ENCODE measurements at regions of chr2 and their contacts with region 1.

Region 1: GRCh38 chr2:207166039-207166348 is 246 bp upstream of the KLF7 start:
- DNase-seq: peak; percentile 99 to 100
- H3K4me3 ChIP-seq: peak overlapping the region; percentile 79 to 95
- H3K27ac ChIP-seq: peak overlapping the region; percentile 100
- H3K4me1 ChIP-seq: peaks cover 6 to 16% of the 10 kb centered on the region in 2 donors
- H3K27me3 ChIP-seq: no peaks in the 10 kb centered on the region
- CTCF ChIP-seq: no peak

Region 2: GRCh38 chr2:207041786-207042554 is 124.0 kb before region 1 on chr2:
- intact Hi-C with region 1: loop called (anchors 1 kb)
- DNase-seq: no peak
- H3K4me3 ChIP-seq: peak overlapping the region in 1 of 2 donors; percentile 54
- H3K27ac ChIP-seq: peak overlapping the region; percentile 61 to 71
- H3K4me1 ChIP-seq: peaks cover 0 to 23% of the 10 kb centered on the region in 2 donors
- H3K27me3 ChIP-seq: no peaks in the 10 kb centered on the region
- CTCF ChIP-seq: no peak

Region 3: DNA sequence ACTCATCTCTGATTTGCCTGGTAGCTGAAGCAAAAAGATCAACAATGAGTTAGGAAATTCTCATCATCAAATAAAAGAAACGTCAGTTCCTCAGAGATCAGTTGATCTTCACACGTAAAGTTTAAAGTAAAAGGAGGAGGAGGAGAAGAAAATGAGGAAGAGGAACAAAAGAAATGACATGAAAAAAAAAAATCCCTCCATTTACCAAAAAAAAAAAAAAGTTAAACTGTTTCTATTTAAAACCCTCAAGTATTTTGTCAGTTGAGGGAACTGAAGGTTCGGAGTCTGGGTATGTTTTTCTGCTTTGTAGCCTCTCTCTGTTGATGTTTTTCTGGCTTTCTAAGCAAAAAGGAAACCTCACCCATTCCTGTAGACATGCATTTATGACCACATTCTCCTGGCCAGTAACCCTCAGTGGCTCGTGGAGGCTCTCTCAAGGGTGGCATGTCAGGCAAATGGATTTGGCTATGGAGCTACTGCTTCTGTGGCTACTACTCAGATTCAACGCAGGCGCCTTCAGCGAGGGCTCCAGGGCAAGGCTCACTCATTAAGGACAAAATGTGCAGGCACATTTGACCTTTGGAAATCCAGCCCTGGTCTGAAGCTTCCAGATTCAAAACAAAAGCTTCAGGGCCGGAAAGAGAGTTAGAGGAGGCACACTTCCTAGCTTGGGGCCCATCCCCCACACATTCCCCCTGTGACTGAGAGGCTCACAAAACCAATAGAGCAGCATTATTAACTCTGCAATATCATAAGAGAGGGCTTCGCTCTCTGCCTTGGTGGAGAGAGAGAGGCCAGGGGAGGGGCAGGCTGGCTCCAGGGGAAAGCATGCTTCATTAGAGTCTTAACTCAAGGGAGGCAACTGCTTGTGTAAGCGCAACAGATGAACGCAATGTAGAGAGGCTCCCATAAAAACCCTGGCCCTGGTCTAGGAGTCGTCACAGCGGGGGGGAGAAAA is 22.5 kb before region 1 on chr2:
- intact Hi-C with region 1: loop called (anchors 1 kb)
- DNase-seq: peak; percentile 61 to 91
- H3K4me3 ChIP-seq: peak overlapping the region; percentile 18 to 56
- H3K27ac ChIP-seq: peak overlapping the region; percentile 89 to 96
- H3K4me1 ChIP-seq: peaks cover 17 to 75% of the 10 kb centered on the region in 2 donors
- H3K27me3 ChIP-seq: no peaks in the 10 kb centered on the region
- CTCF ChIP-seq: no peak

Region 4: GRCh38 chr2:207258263-207258991 is 92.4 kb after region 1 on chr2:
- intact Hi-C with region 1: loop called (anchors 1 kb)
- DNase-seq: peak; percentile 69 to 94
- H3K4me3 ChIP-seq: no peak overlapping the region
- H3K27ac ChIP-seq: peak overlapping the region; percentile 66 to 75
- H3K4me1 ChIP-seq: peaks cover 4 to 19% of the 10 kb centered on the region in 2 donors
- H3K27me3 ChIP-seq: no peaks in the 10 kb centered on the region
- CTCF ChIP-seq: no peak

Region 5: DNA sequence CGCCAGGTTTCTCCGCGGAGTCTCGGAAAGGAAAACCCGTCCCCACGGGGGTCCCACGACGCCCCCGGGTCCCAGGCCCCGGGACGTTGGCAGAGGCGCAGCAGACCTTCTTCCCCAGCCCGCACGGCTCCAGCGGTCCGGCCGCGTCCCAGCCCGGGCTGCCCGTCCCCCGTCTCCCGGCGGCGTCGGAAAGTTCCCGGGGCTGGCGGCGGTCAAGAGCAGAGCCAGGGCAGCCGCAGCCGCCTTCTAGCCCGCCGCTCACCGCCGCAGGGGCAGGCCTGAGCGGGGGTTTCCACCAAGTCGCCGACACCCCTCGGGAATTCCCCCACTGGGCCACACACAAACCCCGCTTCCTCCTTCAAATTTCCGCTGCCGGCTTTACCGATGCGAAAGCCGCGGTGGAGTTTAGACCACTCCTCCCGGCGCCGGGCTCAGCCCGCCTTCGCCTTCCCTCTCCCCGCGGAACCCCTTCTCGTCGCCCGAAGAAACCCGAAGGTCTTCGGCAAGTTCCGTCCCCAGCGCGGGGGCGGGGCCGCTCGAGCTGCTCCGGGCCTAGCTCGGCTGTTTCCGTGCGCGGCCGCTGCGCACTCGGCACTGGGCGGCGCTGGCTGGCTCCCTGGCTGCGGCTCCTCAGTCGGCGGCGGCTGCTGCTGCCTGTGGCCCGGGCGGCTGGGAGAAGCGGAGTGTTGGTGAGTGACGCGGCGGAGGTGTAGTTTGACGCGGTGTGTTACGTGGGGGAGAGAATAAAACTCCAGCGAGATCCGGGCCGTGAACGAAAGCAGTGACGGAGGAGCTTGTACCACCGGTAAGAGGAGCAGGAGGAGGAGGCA is 363.6 kb after region 1 on chr2 and contains the start of gene CREB1:
- intact Hi-C with region 1: loop called (anchors 1 kb)
- DNase-seq: peak; percentile 97 to 99
- H3K4me3 ChIP-seq: peak within 1 kb of the TSS; percentile 80 to 95
- H3K27ac ChIP-seq: peak within 1 kb of the TSS; percentile 96 to 97
- H3K4me1 ChIP-seq: peaks cover 7 to 30% of the 10 kb centered on the region in 2 donors
- H3K27me3 ChIP-seq: no peaks in the 10 kb centered on the region
- CTCF ChIP-seq: peak in 1 of 3 experiments; percentile 1
- total RNA-seq, gene CREB1: 12.8 TPM

Region 6: GRCh38 chr2:207558106-207558505 is 392.1 kb after region 1 on chr2:
- intact Hi-C with region 1: no loop called
- DNase-seq: no peak
- H3K4me3 ChIP-seq: no peak overlapping the region
- H3K27ac ChIP-seq: no peak overlapping the region
- H3K4me1 ChIP-seq: peaks cover 0 to 6% of the 10 kb centered on the region in 2 donors
- H3K27me3 ChIP-seq: no peaks in the 10 kb centered on the region
- CTCF ChIP-seq: no peak